Activated CD4-positive, alpha-beta T cell treated with anti-CD3 and anti-CD28 coated beads for 36 hours (primary cell): ENCODE measurements at regions of chr7 and their contacts with region 1.

Region 1: DNA sequence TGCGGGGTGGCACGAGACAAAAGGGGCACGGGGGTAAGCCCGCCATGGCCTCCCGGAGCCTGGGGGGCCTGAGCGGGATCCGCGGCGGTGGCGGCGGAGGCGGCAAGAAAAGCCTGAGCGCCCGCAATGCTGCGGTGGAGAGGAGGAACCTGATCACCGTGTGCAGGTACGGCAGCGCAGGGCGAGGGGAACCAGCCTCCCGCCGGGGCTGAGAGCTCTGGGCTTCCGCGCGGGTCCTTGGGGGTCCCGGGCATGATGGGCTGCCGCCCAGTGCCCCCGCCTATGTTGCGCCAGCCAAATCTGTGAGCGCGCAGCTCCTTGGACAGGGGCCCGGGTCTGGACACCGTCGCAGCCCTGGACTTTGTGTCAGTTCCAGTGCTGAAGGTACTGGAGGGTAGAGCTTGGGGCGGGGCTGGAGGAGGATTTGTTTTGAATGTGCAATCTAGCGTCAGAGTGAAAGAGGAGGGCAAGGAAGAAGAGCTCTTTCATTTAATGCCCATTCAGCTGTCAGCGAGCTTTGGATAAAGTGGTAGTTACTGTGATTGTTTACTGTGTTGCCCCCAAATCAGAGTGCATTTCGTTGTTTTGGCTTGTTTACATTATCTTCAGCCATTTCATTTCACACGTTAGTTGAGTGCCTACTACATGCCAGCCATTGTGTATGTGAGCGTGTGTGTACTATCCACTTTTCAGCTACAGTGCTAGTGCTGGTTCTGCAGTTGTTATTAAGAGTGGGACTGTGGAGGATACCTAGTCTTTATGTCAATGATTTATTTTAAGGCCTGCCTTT is 777 bp downstream of the RUNDC3B start:
- DNase-seq: peak; percentile 68
- ATAC-seq: peak; percentile 40
- H3K4me3 Mint-ChIP-seq: peak overlapping the region; percentile 74
- H3K27ac Mint-ChIP-seq: no peak overlapping the region
- H3K4me1 Mint-ChIP-seq: peaks cover 10% of the 10 kb centered on the region
- H3K27me3 Mint-ChIP-seq: peaks cover 10% of the 10 kb centered on the region

Region 2: DNA sequence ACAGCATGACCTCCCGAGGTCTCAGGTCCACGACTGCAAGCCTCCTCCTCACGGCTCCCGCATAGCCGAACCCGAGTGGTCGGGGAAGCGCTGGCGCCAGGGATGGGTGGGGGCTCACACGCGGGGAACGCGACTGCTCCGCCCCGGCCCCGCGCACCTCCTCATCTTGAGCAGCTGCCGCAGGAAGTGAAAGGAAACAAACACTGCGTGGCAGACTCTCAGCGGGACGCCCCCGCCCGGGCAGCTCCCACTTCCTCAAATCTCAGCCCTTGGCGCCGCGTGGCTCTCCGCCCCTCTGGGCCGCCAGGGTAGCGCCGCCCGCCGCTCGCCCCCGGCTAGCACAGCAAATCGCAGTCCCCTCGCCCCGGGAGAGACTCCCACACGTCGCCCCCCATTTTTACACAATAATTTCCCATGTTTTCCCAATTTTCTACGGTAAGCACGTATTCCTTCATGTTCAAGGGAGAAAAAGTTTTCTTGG is 409.4 kb before region 1 on chr7 and contains the start of gene TMEM243:
- CTCF ChIA-PET with region 1: no interaction called
- POLR2A ChIA-PET with region 1: no interaction called
- intact Hi-C with region 1: loop called in 1 of 2 experiments (anchors 5 kb)
- DNase-seq: peak; percentile 91
- ATAC-seq: peak; percentile 47
- H3K4me3 Mint-ChIP-seq: peak within 1 kb of the TSS; percentile 97
- H3K27ac Mint-ChIP-seq: peak within 1 kb of the TSS; percentile 98
- H3K4me1 Mint-ChIP-seq: peaks cover 33% of the 10 kb centered on the region
- H3K27me3 Mint-ChIP-seq: peaks cover 3% of the 10 kb centered on the region
- total RNA-seq, gene TMEM243: 44.1 to 46.9 TPM

Region 3: DNA sequence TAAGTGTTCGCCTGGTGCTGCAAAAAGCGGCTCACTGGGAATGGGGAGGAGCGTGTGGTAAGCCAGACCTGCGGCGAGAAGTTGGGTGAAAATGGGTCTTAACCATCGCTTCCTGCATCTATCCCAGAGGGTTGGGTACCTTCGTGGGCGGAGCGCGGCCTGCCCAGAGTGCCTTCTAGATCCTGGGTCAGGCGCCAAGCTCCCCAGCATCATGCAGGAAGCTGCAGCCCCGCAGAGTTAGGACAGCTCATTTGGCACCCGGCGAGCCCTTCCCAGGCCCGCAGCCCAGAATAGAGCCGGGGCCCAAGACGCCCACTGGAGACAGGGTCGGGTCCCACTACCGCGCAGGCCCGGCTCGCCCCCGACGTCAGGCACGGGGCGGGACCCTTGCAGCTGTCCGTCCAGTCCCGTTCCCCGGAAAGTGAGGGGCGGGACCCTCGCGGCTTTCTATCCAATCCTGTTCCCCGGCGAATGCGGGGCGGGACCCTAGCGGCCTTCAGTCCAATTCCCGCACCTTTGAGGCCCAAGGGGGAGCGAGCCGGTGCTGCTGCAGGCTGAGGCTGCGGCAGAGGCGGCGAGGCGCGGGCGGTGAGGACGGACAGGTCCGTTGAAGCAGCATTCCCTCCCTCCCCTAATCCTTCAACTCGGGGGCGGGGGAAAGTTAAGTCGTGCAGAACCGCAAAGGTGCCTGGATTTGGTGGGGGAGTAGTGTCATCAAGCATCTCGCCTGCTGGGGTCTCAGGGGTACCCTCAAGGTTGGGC is 283.6 kb before region 1 on chr7 and contains the start of gene CROT:
- CTCF ChIA-PET with region 1: no interaction called
- POLR2A ChIA-PET with region 1: no interaction called
- intact Hi-C with region 1: loop called (anchors 1 kb)
- DNase-seq: peak; percentile 97
- ATAC-seq: peak; percentile 98
- H3K4me3 Mint-ChIP-seq: peak within 1 kb of the TSS; percentile 94
- H3K27ac Mint-ChIP-seq: peak within 1 kb of the TSS; percentile 95
- H3K4me1 Mint-ChIP-seq: peaks cover 45% of the 10 kb centered on the region
- H3K27me3 Mint-ChIP-seq: no peaks in the 10 kb centered on the region
- total RNA-seq, gene CROT: 4.6 to 7.0 TPM

Region 4: DNA sequence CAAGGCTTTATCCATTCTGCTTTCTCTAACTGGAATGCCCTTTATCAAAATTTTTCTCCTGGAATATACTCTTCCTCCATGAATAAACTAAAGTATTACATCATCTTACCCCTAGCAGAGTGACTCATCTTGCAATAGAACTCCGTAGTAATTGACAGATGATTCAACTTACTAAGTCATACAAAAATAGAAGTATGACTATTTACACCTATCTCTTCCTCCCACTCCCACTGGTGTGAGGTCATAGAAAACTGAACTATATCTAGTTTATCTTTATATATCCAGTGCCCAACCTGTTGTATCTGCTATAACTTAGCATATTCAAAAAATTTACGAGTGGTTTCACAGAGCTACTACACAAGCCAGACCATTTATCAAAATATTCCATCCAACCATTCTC is 54.3 kb before region 1 on chr7:
- CTCF ChIA-PET with region 1: interaction called, 6 read pairs
- POLR2A ChIA-PET with region 1: no interaction called
- intact Hi-C with region 1: loop called (anchors 2 to 10 kb)
- DNase-seq: peak; percentile 13
- ATAC-seq: peak; percentile 92
- H3K4me3 Mint-ChIP-seq: no peak overlapping the region
- H3K27ac Mint-ChIP-seq: peak overlapping the region; percentile 44
- H3K4me1 Mint-ChIP-seq: peaks cover 27% of the 10 kb centered on the region
- H3K27me3 Mint-ChIP-seq: no peaks in the 10 kb centered on the region

Region 5: GRCh38 chr7:87658553-87658952 is 29.6 kb after region 1 on chr7:
- CTCF ChIA-PET with region 1: no interaction called
- POLR2A ChIA-PET with region 1: no interaction called
- intact Hi-C with region 1: no loop called
- DNase-seq: no peak
- ATAC-seq: no peak
- H3K4me3 Mint-ChIP-seq: no peak overlapping the region
- H3K27ac Mint-ChIP-seq: no peak overlapping the region
- H3K4me1 Mint-ChIP-seq: no peaks in the 10 kb centered on the region
- H3K27me3 Mint-ChIP-seq: peaks cover 6% of the 10 kb centered on the region

Region 6: GRCh38 chr7:87876040-87876868 is 247.3 kb after region 1 on chr7 and contains the starts of genes DBF4 and SLC25A40:
- CTCF ChIA-PET with region 1: interaction called, 3 read pairs
- POLR2A ChIA-PET with region 1: no interaction called
- intact Hi-C with region 1: loop called (anchors 1 kb)
- DNase-seq: peak; percentile 97
- ATAC-seq: peak; percentile 91
- H3K4me3 Mint-ChIP-seq: peak within 1 kb of the TSS; percentile 82
- H3K27ac Mint-ChIP-seq: peak within 1 kb of the TSS; percentile 93
- H3K4me1 Mint-ChIP-seq: peaks cover 48% of the 10 kb centered on the region
- H3K27me3 Mint-ChIP-seq: no peaks in the 10 kb centered on the region
- total RNA-seq, gene DBF4: 68.6 to 86.4 TPM
- total RNA-seq, gene SLC25A40: 38.0 to 41.9 TPM

Region 7: DNA sequence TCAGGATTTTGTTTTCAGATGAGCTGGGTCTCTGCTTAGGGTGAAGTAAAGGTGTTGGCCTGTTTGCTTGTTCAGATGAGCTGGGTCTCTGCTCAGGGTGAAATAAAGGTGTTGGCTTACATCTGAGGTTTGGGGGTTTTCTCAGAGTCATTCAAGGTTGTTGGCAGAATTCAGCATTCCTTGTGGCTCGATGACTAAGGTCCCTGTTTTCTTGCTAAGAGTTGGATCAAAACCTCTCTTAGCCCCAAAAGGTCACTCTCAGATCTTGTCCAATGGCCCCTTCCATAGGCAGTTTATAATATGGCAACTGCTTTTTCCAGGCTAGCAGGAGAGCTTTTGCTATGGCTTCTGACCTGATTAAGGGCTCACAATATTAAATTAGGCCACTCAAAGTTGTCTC is 411.7 kb after region 1 on chr7:
- CTCF ChIA-PET with region 1: no interaction called
- POLR2A ChIA-PET with region 1: no interaction called
- intact Hi-C with region 1: no loop called
- DNase-seq: no peak
- ATAC-seq: no peak
- H3K4me3 Mint-ChIP-seq: no peak overlapping the region
- H3K27ac Mint-ChIP-seq: no peak overlapping the region
- H3K4me1 Mint-ChIP-seq: peaks cover 6% of the 10 kb centered on the region
- H3K27me3 Mint-ChIP-seq: no peaks in the 10 kb centered on the region

Region 8: DNA sequence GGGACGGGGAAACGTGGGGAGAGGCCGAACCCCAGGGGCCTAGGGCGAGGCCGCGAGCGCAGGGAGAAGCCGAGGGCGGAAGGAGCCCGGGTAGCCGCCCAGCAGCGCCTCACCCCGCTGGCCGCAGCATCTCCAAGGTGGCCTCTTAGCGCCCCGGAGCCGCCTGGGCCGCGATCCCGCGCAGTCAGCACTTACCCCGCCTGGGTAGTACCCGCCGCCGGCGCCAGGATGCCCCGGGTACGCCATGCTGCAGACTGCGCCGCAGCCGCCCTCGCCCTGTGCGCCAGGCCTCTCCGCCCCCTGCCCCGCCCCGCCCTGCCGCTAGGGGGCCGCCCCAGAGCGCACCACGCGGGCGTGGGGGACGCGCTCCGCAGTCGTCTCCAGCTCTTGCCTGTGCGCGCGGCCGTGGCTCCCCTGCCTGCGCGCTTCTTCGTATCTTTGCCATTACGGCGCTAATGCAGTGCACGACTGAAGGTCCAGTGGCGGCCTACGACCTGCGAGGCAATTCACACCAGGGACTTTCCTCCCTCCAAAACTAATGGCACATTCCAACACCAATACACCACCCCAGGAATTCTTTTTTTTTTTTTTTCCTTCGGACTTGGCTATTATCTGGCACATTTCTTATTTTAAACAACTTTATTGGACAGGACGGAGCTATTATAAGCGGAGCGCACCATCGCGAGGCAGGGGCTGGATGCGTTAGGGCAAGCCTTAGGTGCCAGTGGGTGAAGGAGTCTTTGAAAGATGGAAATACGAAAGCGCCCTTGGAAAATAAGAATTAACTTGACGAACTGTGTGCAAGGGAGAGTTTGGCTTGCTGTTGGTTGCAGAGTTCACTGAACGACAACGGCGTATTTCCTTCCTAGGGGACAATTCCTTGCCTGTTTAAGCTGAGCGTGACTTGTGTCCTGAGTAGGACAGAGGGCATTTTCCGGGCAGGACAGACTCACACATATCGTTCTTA is 591.1 kb after region 1 on chr7 and contains the start of gene SRI:
- CTCF ChIA-PET with region 1: no interaction called
- POLR2A ChIA-PET with region 1: no interaction called
- intact Hi-C with region 1: loop called in 1 of 2 experiments (anchors 2 kb)
- DNase-seq: peak; percentile 94
- ATAC-seq: peak; percentile 97
- H3K4me3 Mint-ChIP-seq: peak within 1 kb of the TSS; percentile 95
- H3K27ac Mint-ChIP-seq: peak within 1 kb of the TSS; percentile 95
- H3K4me1 Mint-ChIP-seq: peaks cover 24% of the 10 kb centered on the region
- H3K27me3 Mint-ChIP-seq: no peaks in the 10 kb centered on the region
- total RNA-seq, gene SRI: 157 to 193 TPM